GM12878 (cell line): ENCODE measurements at regions of chr4 and their contacts with region 1.

Region 1: GRCh38 chr4:166039822-166040221 is 166.8 kb downstream of the TLL1 start:
- DNase-seq: no peak
- ATAC-seq: peak; percentile 72
- H3K4me3 ChIP-seq: no peak overlapping the region
- H3K27ac ChIP-seq: no peak overlapping the region
- H3K4me1 ChIP-seq: no peaks in the 10 kb centered on the region
- H3K27me3 ChIP-seq: no peaks in the 10 kb centered on the region
- CTCF ChIP-seq: no peak
- EP300 ChIP-seq: peak in 1 of 2 experiments; percentile 17; a peak in 1 of 4 replicates
- POLR2A ChIP-seq: no peak
- RAD21 ChIP-seq: no peak

Region 2: DNA sequence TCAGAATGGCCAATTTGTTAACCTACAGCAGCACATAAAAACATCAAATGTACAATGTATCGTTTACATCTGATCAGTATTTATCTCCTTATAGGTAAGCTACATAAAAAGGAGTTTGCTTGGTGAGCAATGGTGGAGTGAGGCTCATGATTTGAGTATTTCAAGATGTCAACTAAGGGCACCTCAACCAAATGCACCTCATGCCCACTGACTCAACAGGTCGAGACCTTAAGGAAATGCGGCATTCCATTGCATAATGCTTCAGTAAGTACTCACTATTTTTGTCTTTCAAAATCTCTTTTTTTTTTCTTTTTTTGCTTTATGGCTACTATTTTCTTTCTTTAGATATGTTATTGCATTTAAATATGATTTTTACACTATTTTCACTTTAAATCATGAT is 347.7 kb before region 1 on chr4:
- CTCF ChIA-PET with region 1: no interaction called
- POLR2A ChIA-PET with region 1: no interaction called
- RAD21 ChIA-PET with region 1: no interaction called
- SMC1A ChIA-PET with region 1: no interaction called
- in situ Hi-C with region 1: no loop called
- intact Hi-C with region 1: no loop called
- DNase-seq: no peak
- ATAC-seq: no peak
- H3K4me3 ChIP-seq: no peak overlapping the region
- H3K27ac ChIP-seq: no peak overlapping the region
- H3K4me1 ChIP-seq: no peaks in the 10 kb centered on the region
- H3K27me3 ChIP-seq: no peaks in the 10 kb centered on the region
- CTCF ChIP-seq: no peak
- EP300 ChIP-seq: no peak
- POLR2A ChIP-seq: no peak
- RAD21 ChIP-seq: no peak

Region 3: GRCh38 chr4:165787516-165788274 is 252.1 kb before region 1 on chr4:
- CTCF ChIA-PET with region 1: no interaction called
- POLR2A ChIA-PET with region 1: no interaction called
- RAD21 ChIA-PET with region 1: no interaction called
- SMC1A ChIA-PET with region 1: no interaction called
- in situ Hi-C with region 1: no loop called
- intact Hi-C with region 1: no loop called
- DNase-seq: no peak
- ATAC-seq: no peak
- H3K4me3 ChIP-seq: no peak overlapping the region
- H3K27ac ChIP-seq: no peak overlapping the region
- H3K4me1 ChIP-seq: no peaks in the 10 kb centered on the region
- H3K27me3 ChIP-seq: no peaks in the 10 kb centered on the region
- CTCF ChIP-seq: no peak
- EP300 ChIP-seq: no peak
- POLR2A ChIP-seq: no peak
- RAD21 ChIP-seq: no peak

Region 4: GRCh38 chr4:166075599-166075998 is 35.8 kb after region 1 on chr4:
- CTCF ChIA-PET with region 1: interaction called, 8 read pairs
- POLR2A ChIA-PET with region 1: interaction called, 4 read pairs
- RAD21 ChIA-PET with region 1: interaction called, 10 read pairs
- SMC1A ChIA-PET with region 1: interaction called, 9 read pairs
- in situ Hi-C with region 1: no loop called
- intact Hi-C with region 1: no loop called
- DNase-seq: no peak
- ATAC-seq: no peak
- H3K4me3 ChIP-seq: no peak overlapping the region
- H3K27ac ChIP-seq: no peak overlapping the region
- H3K4me1 ChIP-seq: no peaks in the 10 kb centered on the region
- H3K27me3 ChIP-seq: no peaks in the 10 kb centered on the region
- CTCF ChIP-seq: no peak
- EP300 ChIP-seq: no peak
- POLR2A ChIP-seq: no peak
- RAD21 ChIP-seq: no peak